HEK293 (cell line): ENCODE measurements at regions of chr1 and their contacts with region 1.

Region 1: GRCh38 chr1:67766141-67766978 is 66.9 kb downstream of the GNG12 start:
- H3K4me3 ChIP-seq: peak overlapping the region; percentile 20
- H3K27ac ChIP-seq: no peak overlapping the region
- H3K4me1 ChIP-seq: peaks cover 7% of the 10 kb centered on the region; the same call in 1 of the 2 replicates
- CTCF ChIP-seq: peak; percentile 62

Region 2: DNA sequence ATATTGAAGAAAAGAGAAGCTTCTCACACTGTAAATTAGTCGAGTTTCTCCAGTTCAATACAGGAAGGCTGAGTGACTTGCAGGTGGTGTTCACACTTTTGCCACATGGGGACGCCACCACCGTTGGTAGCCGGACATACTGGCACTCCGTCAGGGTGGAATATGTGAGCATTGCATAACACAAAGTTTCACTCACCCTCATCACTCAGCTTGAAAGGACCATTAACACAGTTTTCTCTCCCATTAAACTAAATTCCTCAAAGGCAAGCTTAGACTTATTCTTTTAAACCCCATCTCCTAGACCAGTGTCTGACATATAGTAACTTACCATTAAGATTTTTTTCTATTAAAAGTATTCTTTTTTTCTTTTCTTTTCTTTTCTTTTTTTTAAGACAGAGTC is 230.9 kb before region 1 on chr1:
- CTCF ChIA-PET with region 1: interaction called, 159 read pairs
- POLR2A ChIA-PET with region 1: interaction called, 4 read pairs
- H3K4me3 ChIP-seq: no peak overlapping the region
- H3K27ac ChIP-seq: no peak overlapping the region
- H3K4me1 ChIP-seq: no peaks in the 10 kb centered on the region
- CTCF ChIP-seq: peak; percentile 83

Region 3: GRCh38 chr1:67685067-67685557 is 81.2 kb before region 1 on chr1 and contains the start of gene GADD45A:
- CTCF ChIA-PET with region 1: interaction called, 18 read pairs
- POLR2A ChIA-PET with region 1: interaction called, 40 read pairs
- H3K4me3 ChIP-seq: peak within 1 kb of the TSS; percentile 92
- H3K27ac ChIP-seq: peak within 1 kb of the TSS; percentile 96
- H3K4me1 ChIP-seq: peaks cover 8% of the 10 kb centered on the region; the same call in 1 of the 2 replicates
- CTCF ChIP-seq: peak; percentile 50

Region 4: GRCh38 chr1:67791686-67792475 is 25.5 kb after region 1 on chr1:
- CTCF ChIA-PET with region 1: interaction called, 11 read pairs
- POLR2A ChIA-PET with region 1: interaction called, 3 read pairs
- H3K4me3 ChIP-seq: no peak overlapping the region
- H3K27ac ChIP-seq: no peak overlapping the region
- H3K4me1 ChIP-seq: peaks cover 13% of the 10 kb centered on the region; the same call in 1 of the 2 replicates
- CTCF ChIP-seq: no peak

Region 5: DNA sequence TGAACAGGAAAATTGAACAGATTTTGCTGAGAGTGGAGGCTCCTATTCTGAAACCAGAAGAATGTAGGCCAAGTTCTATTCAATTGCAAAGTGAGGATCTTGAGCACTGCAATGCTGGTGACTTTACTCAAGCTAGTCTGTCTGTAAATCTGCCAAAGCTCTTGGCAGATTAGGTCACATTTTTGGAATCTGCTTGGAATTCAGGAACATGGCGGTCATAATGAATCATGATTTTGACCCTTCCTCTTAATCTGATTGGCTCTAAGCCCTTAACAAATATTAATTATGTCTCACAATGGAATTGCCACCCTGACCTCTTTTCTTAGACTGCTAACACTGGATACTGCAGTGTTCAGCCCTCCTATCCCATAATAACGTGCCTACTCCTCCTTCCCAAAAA is 74.1 kb after region 1 on chr1:
- CTCF ChIA-PET with region 1: interaction called, 18 read pairs
- POLR2A ChIA-PET with region 1: no interaction called
- H3K4me3 ChIP-seq: no peak overlapping the region
- H3K27ac ChIP-seq: no peak overlapping the region
- H3K4me1 ChIP-seq: peaks cover 8% of the 10 kb centered on the region; the same call in 1 of the 2 replicates
- CTCF ChIP-seq: no peak

Region 6: DNA sequence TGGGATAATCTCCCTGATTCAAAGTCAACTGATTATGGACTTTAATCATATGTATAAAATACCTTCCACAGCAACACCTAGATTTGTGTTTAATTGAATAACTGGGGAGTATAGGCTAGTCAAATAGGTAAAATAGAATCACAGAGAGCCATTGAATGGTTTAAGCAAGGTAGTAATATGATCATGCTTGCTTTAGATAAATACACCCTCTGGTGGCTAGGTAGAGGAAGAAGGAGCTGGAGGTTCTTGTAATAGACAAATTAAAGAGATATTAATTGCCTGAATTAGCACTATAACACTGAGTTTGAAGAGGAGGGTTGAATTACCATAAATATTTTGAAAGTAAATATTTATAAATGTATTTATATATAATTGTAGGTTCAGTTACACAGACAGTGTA is 243.7 kb after region 1 on chr1:
- CTCF ChIA-PET with region 1: interaction called, 17 read pairs
- POLR2A ChIA-PET with region 1: no interaction called
- H3K4me3 ChIP-seq: no peak overlapping the region
- H3K27ac ChIP-seq: no peak overlapping the region
- H3K4me1 ChIP-seq: no peaks in the 10 kb centered on the region
- CTCF ChIP-seq: no peak

Region 7: DNA sequence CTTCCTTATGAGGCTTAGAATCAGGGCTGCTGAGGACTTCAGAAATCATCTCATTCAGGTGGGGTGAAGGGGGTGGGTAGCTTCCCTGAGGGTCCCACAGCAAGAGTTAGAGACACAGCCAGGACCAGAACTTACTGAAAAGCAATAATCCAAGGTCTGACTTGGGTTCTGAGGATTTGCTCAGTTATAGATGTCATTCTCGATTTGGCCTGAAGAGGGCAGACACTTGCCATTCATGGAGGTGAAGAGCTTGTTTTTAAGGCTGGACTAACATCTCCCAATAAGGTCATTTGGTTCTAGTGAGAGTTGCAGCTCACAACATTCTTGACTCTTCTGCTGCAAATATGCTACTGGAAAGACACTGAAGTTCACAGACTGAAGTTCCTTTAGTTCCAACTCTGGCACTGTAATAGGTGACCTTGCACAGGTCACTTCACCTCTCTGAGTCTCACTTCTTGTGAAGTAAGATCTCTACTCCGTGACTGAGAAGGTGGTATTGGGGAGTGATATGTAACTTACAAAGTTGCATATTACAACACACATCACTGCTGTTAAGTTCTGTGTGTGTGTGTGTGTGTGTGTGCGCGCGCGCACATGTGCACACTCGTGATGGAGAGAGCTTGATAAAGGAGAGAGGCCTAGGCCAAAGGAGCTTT is 353.9 kb after region 1 on chr1:
- CTCF ChIA-PET with region 1: interaction called, 16 read pairs
- POLR2A ChIA-PET with region 1: no interaction called
- H3K4me3 ChIP-seq: no peak overlapping the region
- H3K27ac ChIP-seq: no peak overlapping the region
- H3K4me1 ChIP-seq: no peaks in the 10 kb centered on the region
- CTCF ChIP-seq: peak; percentile 65; the same call in 1 of the 2 replicates